ENCODE measurements at regions of chr6 and their contacts with region 1.

Region 1: GRCh38 chr6:43228951-43229802 is at the start of gene DNPH1:
- DNase-seq: peak; percentile 62 to 86 (median 82)
- ATAC-seq: peak; percentile 74 to 82
- H3K4me3 Mint-ChIP-seq: peak within 1 kb of the TSS; percentile 80 to 92 (median 90)
- H3K27ac Mint-ChIP-seq: peak within 1 kb of the TSS; percentile 91 to 100 (median 96)
- H3K4me1 Mint-ChIP-seq: peaks cover 18 to 49% (median 43%) of the 10 kb centered on the region in 4 donors
- H3K27me3 Mint-ChIP-seq: peaks cover 0 to 6% (median 0%) of the 10 kb centered on the region in 5 donors
- polyA plus RNA-seq, gene DNPH1: 109 to 173 (median 121) TPM

Region 2: DNA sequence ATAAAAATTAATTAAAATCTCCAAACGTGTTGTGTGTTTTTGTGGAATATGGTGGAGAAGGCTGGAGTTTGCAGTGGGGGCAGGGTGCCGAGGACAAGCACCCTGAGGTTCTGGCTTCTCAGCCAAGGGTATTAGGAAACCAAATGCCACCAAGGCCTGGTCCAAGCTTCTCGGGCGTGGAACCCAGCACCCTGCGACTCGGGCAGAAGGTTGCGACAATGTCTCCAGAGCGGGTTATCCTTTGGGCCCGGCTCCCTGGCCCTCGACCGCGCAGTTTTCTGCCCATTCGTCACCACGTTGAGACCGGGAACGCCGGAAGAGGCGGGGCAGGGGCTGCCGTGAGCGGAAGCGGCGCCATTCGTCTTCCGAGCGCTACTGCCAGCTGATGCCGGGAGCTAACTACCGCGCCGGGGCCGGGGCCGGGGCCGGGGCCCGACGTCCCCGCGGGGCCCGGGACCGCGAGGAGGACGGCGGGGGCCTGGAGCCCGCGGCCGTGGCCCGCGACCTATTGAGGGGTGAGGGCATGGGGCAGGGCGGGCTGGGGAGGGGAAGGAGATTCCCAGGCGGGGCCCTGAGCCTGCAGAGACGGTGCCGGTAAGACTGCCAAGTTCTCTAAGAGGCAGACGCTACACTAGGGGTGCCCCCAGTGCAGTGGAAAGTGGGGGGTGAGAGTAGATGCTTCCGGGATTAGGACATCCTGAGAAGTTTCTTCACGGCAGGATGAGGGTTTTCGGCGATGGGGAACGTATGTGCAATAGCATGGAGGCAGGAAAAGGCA is 207.7 kb before region 1 on chr6 and contains the start of gene RRP36:
- POLR2A ChIA-PET with region 1: no interaction called
- DNase-seq: peak; percentile 39 to 76 (median 58)
- ATAC-seq: peak; percentile 83 to 88
- H3K4me3 Mint-ChIP-seq: peak within 1 kb of the TSS; percentile 95 to 99 (median 98)
- H3K27ac Mint-ChIP-seq: peak within 1 kb of the TSS; percentile 68 to 97 (median 93)
- H3K4me1 Mint-ChIP-seq: peaks cover 34 to 50% (median 48%) of the 10 kb centered on the region in 4 donors
- H3K27me3 Mint-ChIP-seq: no peaks in the 10 kb centered on the region
- polyA plus RNA-seq, gene RRP36: 52.7 to 74.5 (median 57.8) TPM

Region 3: GRCh38 chr6:43174263-43175112 is 54.7 kb before region 1 on chr6:
- POLR2A ChIA-PET with region 1: interaction called, 33 read pairs
- DNase-seq: peak; percentile 70 to 97 (median 88)
- ATAC-seq: peak; percentile 58 to 59
- H3K4me3 Mint-ChIP-seq: peak overlapping the region; percentile 69 to 98 (median 94)
- H3K27ac Mint-ChIP-seq: peak overlapping the region; percentile 87 to 99 (median 96)
- H3K4me1 Mint-ChIP-seq: peaks cover 24 to 58% (median 48%) of the 10 kb centered on the region in 4 donors
- H3K27me3 Mint-ChIP-seq: peaks cover 0 to 2% (median 0%) of the 10 kb centered on the region in 5 donors

Region 4: DNA sequence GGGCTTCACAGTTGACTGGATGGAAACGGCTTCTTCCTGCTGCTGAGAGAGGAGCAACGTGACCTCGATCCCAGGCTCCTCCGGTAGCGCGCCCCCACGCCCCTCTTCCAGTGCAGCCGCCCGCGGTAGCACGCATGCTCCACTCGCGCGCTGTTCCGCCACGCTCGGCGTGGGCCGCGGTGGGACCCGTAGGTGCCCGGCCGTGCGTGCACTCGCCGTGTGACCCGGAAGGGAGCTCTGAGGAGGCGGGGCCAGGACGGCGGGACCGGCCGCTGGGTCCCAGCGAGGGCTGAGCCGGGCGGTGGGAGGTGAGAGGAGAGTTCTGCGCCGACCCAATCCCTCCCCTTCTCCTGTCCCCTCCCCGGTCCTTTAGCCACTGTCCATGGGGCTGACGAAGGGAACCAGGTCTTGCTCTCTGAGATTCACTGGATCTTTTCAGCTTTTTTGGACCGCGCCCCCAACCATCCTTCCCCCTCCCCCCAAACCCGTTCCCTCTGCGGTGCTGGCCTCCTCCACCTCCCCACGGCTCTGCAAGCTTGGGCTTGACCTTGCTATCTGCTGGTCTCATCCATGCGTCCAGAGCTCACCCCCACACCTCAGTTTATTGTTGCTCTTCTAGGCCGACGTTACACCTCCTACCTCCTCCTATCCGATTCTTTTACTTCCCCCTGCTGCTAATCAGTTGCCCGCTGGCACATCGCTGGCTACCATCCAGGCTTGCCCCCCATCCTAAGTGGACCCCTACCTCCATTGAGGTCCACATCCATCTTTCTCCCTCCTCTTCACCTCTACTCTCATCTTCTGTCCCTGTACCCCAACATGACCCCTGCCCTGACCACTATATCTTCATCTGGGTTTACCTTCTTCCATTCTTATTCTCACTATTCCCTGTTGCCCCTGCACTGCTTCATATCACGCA is 47.0 kb before region 1 on chr6 and contains the start of gene CUL9:
- POLR2A ChIA-PET with region 1: interaction called, 11 read pairs
- DNase-seq: peak; percentile 68 to 89 (median 77)
- ATAC-seq: peak; percentile 91 to 96
- H3K4me3 Mint-ChIP-seq: peak within 1 kb of the TSS; percentile 86 to 97 (median 94)
- H3K27ac Mint-ChIP-seq: peak within 1 kb of the TSS; percentile 89 to 97 (median 96)
- H3K4me1 Mint-ChIP-seq: peaks cover 37 to 56% (median 52%) of the 10 kb centered on the region in 4 donors
- H3K27me3 Mint-ChIP-seq: no peaks in the 10 kb centered on the region
- polyA plus RNA-seq, gene CUL9: 6.8 to 10.4 (median 10.3) TPM

Measured in naive thymus-derived CD8-positive, alpha-beta T cell (primary cell).